MCF 10A (cell line): ENCODE measurements at regions of chr2 and their contacts with region 1.

Region 1: GRCh38 chr2:64562148-64562784 is 38.1 kb downstream of the AFTPH start:
- DNase-seq: peak; percentile 34
- H3K4me3 Mint-ChIP-seq: no peak overlapping the region
- H3K27ac Mint-ChIP-seq: no peak overlapping the region
- H3K4me1 Mint-ChIP-seq: peaks cover 9% of the 10 kb centered on the region
- H3K27me3 Mint-ChIP-seq: no peaks in the 10 kb centered on the region
- CTCF ChIP-seq: peak; percentile 27

Region 2: DNA sequence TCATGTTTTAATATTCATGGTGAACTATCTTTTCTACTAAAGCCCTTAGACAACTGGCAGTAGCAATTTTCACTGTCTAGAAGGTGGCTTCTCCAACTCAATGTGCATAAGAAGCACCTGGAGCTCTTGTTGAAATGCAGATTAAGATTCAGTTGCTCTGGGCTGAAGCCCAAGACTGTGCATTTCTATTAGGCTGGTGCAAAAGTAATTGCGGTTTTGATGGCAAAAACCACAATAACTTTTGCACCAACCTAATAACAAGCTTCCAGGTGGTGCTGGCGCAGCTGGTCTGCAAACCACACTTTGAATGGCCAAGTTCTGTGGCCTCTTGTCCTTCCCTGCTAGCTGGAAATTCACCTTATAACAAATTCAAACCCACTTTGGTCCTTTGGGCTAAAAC is 516.3 kb before region 1 on chr2:
- CTCF ChIA-PET with region 1: no interaction called
- POLR2A ChIA-PET with region 1: no interaction called
- intact Hi-C with region 1: loop called (anchors 5 kb)
- DNase-seq: no peak
- H3K4me3 Mint-ChIP-seq: no peak overlapping the region
- H3K27ac Mint-ChIP-seq: no peak overlapping the region
- H3K4me1 Mint-ChIP-seq: peaks cover 6% of the 10 kb centered on the region
- H3K27me3 Mint-ChIP-seq: no peaks in the 10 kb centered on the region
- CTCF ChIP-seq: no peak

Region 3: DNA sequence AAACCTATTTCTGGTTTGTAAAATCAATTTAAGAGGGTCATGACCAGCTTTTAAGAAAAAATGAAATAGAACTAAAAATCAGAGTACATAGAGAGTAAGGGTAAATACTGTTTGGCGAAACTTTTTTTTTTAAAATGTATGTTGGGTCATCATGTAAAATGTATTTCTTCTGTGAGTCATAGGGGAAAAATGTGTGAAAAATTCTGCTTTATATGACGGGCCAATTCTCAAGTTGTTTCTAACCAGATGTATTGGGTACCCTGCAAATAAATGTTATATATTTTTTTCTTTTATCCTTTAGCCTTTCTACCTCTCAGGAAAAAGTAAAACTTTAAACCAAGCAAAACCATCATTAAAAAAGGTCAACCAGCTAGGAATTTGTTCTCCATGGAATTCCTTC is 24.3 kb before region 1 on chr2:
- CTCF ChIA-PET with region 1: no interaction called
- POLR2A ChIA-PET with region 1: no interaction called
- intact Hi-C with region 1: no loop called
- DNase-seq: peak; percentile 23
- H3K4me3 Mint-ChIP-seq: no peak overlapping the region
- H3K27ac Mint-ChIP-seq: no peak overlapping the region
- H3K4me1 Mint-ChIP-seq: peaks cover 38% of the 10 kb centered on the region
- H3K27me3 Mint-ChIP-seq: no peaks in the 10 kb centered on the region
- CTCF ChIP-seq: no peak

Region 4: GRCh38 chr2:64914735-64915509 is 352.7 kb after region 1 on chr2:
- CTCF ChIA-PET with region 1: no interaction called
- POLR2A ChIA-PET with region 1: no interaction called
- intact Hi-C with region 1: no loop called
- DNase-seq: no peak
- H3K4me3 Mint-ChIP-seq: no peak overlapping the region
- H3K27ac Mint-ChIP-seq: no peak overlapping the region
- H3K4me1 Mint-ChIP-seq: no peaks in the 10 kb centered on the region
- H3K27me3 Mint-ChIP-seq: no peaks in the 10 kb centered on the region
- CTCF ChIP-seq: no peak